Endothelial cell of umbilical vein (primary cell): ENCODE measurements at regions of chr3 and their contacts with region 1.

Region 1: GRCh38 chr3:50568947-50569749 is at the start of gene HEMK1:
- DNase-seq: peak; percentile 87
- H3K4me3 ChIP-seq: peak within 1 kb of the TSS; percentile 84 to 91 (median 85)
- H3K27ac ChIP-seq: peak within 1 kb of the TSS; percentile 31
- H3K4me1 ChIP-seq: peaks cover 10% of the 10 kb centered on the region
- H3K27me3 ChIP-seq: no peaks in the 10 kb centered on the region
- CTCF ChIP-seq: no peak
- POLR2A ChIP-seq: peak; percentile 24
- total RNA-seq, gene HEMK1: 12.0 and 15.2 TPM in 2 replicates

Region 2: DNA sequence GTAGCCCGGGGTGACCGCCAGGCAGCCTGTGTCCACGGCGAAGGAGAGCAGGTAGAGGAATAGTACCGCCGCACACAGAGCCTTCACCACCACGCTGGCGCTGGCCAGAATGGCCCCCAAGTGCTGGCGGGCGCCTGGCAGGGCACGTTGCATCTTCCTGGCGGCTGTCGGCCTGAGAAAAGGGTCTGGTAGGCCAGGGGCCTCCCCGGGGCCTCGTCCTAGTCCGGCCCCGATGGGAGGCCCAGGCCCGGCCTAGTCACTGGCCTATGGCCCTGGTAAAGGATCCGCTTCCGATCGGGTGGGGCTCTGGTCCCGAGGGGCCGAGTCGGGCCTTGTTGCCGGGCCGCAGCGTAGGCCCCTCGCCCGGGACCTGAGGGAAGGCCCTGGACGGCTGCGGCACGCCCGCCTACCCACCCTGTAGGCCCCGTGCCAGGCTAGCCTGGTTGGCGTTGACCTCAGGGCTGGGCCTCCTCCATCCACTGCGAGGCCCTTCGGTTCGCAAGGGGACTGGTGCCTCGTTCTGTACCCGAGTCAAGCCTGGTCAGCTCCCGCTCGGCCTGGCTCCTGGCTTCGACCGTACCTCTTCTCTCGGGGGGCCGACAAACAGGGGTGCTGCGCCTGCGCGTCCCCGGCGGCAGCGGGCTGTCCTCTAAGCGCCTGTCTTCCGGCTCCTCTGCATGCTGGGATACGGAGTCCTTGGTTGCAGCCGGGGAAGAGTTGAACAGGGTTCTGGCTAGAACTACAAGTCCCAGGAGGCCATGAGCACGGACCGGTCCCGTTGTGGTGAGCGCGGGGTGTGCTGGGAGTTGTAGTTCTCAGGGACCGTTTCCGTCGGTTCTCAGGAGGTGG is 210.0 kb before region 1 on chr3 and contains the start of gene TMEM115:
- CTCF ChIA-PET with region 1: no interaction called
- POLR2A ChIA-PET with region 1: no interaction called
- dilution Hi-C with region 1: no loop called
- intact Hi-C with region 1: loop called (anchors 1 kb)
- DNase-seq: peak; percentile 98
- H3K4me3 ChIP-seq: peak within 1 kb of the TSS; percentile 26 to 83 (median 63)
- H3K27ac ChIP-seq: peak within 1 kb of the TSS; percentile 52
- H3K4me1 ChIP-seq: peaks cover 31% of the 10 kb centered on the region
- H3K27me3 ChIP-seq: no peaks in the 10 kb centered on the region
- CTCF ChIP-seq: no peak
- POLR2A ChIP-seq: peak; percentile 85
- total RNA-seq, gene TMEM115: 43.2 and 44.7 TPM in 2 replicates

Region 3: DNA sequence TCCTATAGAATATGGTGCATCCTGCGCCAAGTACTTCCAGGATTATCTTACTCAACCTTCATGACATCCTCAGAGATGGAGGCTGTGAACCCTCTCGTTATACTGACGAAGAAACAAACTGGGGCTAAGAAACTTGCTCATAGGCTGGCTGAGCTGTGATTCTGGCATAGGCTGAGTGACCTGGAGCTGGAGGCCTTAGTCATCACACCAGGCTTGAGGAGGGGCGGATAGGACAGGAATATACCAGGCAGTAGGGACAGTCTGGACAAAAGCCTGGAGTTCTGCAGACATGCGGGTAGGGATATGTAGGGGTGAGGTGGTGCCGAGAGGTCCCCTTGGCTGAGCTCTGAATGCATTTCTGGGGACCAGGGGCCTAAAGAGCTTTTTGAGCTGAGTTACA is 18.2 kb after region 1 on chr3:
- CTCF ChIA-PET with region 1: interaction called, 12 read pairs
- POLR2A ChIA-PET with region 1: no interaction called
- dilution Hi-C with region 1: no loop called
- intact Hi-C with region 1: no loop called
- DNase-seq: no peak
- H3K4me3 ChIP-seq: no peak overlapping the region
- H3K27ac ChIP-seq: no peak overlapping the region
- H3K4me1 ChIP-seq: no peaks in the 10 kb centered on the region
- H3K27me3 ChIP-seq: no peaks in the 10 kb centered on the region
- CTCF ChIP-seq: no peak
- POLR2A ChIP-seq: no peak

Region 4: DNA sequence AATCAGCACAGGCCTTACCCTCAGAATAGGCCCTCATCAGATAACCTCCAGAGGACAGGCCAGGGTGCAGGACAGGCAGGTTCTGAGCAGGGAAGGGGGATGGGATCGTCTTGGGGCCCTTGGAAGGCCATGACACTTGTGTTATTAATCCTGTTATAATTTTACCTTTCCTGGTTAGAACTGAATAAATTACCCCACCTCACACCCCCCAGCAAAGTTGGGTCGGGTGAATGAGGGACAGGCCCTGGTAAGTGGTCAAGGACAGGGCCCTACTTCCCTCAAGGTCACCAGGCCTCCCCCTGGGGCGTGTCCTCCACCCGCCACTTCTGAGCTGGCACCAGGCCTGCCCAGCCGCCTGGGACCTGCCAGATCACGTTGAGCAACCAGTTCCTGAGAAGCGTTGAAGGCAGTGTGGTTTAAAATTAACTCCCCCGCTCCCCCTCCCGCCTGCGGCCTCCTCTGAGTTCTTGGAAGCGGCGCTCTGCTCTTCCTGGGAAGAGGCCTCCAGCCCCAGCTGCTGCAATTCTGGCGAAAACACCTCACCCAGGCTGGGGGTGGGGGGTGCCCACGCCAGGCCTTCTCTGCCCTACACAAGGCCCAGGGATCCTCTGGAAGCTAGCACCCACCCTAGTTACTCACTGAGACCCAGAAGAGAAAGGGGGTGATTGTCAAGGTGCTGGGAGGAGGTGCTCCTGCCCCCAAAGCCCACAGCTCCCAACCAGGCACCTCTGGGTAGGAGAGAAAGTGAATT is 31.9 kb after region 1 on chr3:
- CTCF ChIA-PET with region 1: interaction called, 8 read pairs
- POLR2A ChIA-PET with region 1: interaction called, 7 read pairs
- dilution Hi-C with region 1: no loop called
- intact Hi-C with region 1: loop called (anchors 1 kb)
- DNase-seq: peak; percentile 87
- H3K4me3 ChIP-seq: no peak overlapping the region
- H3K27ac ChIP-seq: peak overlapping the region; percentile 42
- H3K4me1 ChIP-seq: peaks cover 10% of the 10 kb centered on the region
- H3K27me3 ChIP-seq: no peaks in the 10 kb centered on the region
- CTCF ChIP-seq: no peak
- POLR2A ChIP-seq: no peak

Region 5: DNA sequence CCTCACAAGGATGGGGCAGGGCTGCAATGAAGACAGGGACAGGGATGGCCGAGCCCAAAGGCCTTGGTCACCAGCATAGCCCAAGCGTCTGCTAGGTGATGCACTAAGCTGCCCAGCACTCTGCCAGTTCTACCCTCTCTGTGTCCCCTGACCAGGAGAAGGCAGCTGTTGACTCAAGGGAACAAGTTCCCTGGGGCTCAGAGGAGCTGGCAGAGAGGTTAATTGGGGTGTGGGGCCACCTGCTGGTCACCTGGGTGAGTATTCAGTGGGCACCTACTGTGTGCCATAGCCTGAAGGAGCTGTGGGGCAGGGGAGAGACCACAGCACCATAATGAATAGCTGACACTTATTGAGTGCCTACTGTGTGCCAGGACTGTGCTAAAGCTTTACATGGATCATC is 83.6 kb after region 1 on chr3:
- CTCF ChIA-PET with region 1: interaction called, 6 read pairs
- POLR2A ChIA-PET with region 1: no interaction called
- dilution Hi-C with region 1: no loop called
- intact Hi-C with region 1: loop called (anchors 1 kb)
- DNase-seq: peak; percentile 17
- H3K4me3 ChIP-seq: no peak overlapping the region
- H3K27ac ChIP-seq: no peak overlapping the region
- H3K4me1 ChIP-seq: no peaks in the 10 kb centered on the region
- H3K27me3 ChIP-seq: no peaks in the 10 kb centered on the region
- CTCF ChIP-seq: peak; percentile 19 to 37
- POLR2A ChIP-seq: no peak

Region 6: DNA sequence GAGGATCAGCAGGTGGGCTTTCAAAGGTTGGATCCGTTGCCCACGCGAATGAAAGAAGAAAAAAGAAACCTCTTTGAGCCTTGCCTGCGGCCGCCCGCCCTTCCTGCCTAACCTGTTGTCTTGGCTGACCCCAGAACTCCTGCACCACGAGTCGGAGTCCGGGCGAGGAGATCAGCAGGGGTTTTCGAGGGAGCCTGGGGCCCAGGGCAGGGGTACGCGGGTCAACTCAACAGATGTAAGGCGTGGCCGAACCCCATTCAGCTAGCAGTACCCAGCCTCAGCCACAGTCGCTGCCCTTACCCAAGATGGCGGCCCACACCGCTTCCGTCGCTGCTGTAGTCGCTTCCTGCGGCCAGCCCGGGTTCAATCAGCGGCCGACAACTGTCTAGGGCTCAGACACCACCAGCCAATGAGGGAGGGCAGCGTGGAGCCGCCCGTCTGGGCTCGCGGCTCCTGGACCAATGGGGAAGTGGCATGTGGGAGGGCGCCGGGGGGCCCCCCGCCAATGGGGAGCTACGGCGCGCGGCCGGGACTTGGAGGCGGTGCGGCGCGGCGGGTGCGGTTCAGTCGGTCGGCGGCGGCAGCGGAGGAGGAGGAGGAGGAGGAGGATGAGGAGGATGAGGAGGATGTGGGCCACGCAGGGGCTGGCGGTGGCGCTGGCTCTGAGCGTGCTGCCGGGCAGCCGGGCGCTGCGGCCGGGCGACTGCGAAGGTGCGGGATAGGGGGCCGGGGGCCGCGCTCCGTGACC is 815.8 kb after region 1 on chr3 and contains the start of gene MANF:
- CTCF ChIA-PET with region 1: interaction called, 6 read pairs
- POLR2A ChIA-PET with region 1: no interaction called
- dilution Hi-C with region 1: no loop called
- intact Hi-C with region 1: loop called (anchors 2 kb)
- DNase-seq: peak; percentile 99
- H3K4me3 ChIP-seq: peak within 1 kb of the TSS; percentile 64 to 97 (median 93)
- H3K27ac ChIP-seq: peak within 1 kb of the TSS; percentile 95
- H3K4me1 ChIP-seq: peaks cover 29% of the 10 kb centered on the region
- H3K27me3 ChIP-seq: no peaks in the 10 kb centered on the region
- CTCF ChIP-seq: no peak
- POLR2A ChIP-seq: peak; percentile 89
- total RNA-seq, gene MANF: 248 and 254 TPM in 2 replicates